ENCODE measurements at regions of chr22 and their contacts with region 1.

Region 1: GRCh38 chr22:40651563-40652501 is 15.3 kb upstream of the MRTFA start:
- DNase-seq: peak; percentile 100
- H3K4me3 ChIP-seq: peak overlapping the region; percentile 51 to 55 (median 52)
- H3K27ac ChIP-seq: peak overlapping the region; percentile 99
- H3K4me1 ChIP-seq: peaks cover 34% of the 10 kb centered on the region
- H3K27me3 ChIP-seq: no peaks in the 10 kb centered on the region
- CTCF ChIP-seq: peak in 1 of 2 donors; percentile 21

Region 2: GRCh38 chr22:40463683-40464082 is 188.1 kb before region 1 on chr22:
- CTCF ChIA-PET with region 1: no interaction called
- dilution Hi-C with region 1: no loop called
- in situ Hi-C with region 1: no loop called
- intact Hi-C with region 1: no loop called
- DNase-seq: no peak
- H3K4me3 ChIP-seq: no peak overlapping the region
- H3K27ac ChIP-seq: no peak overlapping the region
- H3K4me1 ChIP-seq: no peaks in the 10 kb centered on the region
- H3K27me3 ChIP-seq: no peaks in the 10 kb centered on the region
- CTCF ChIP-seq: no peak

Region 3: DNA sequence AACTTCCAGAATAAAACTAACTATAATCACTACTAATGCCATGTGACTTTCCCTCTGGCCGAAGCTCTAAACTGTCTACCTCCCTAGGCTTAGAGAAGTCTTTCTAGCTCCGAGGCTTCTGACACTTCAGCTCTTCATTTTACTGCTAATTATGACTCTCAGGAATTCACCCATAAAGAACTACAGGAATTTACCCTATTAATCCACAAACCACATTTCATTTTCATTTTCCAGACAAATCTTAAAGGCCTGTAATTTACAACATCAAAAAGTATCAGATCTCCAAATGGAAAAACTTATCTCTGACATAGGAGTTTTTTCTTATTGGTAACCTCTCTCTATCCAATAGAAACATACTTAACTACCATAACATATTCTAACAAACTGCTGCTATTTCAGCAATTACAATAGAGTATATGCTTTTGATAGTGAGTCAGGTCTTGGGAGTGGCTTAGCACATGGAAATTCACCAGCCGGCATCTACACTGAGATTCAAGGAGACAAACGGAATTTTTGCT is 48.7 kb before region 1 on chr22:
- CTCF ChIA-PET with region 1: no interaction called
- dilution Hi-C with region 1: no loop called
- in situ Hi-C with region 1: no loop called
- intact Hi-C with region 1: no loop called
- DNase-seq: peak; percentile 66
- H3K4me3 ChIP-seq: peak overlapping the region in 2 of 3 experiments; percentile 21 to 37
- H3K27ac ChIP-seq: peak overlapping the region; percentile 92
- H3K4me1 ChIP-seq: peaks cover 52% of the 10 kb centered on the region
- H3K27me3 ChIP-seq: no peaks in the 10 kb centered on the region
- CTCF ChIP-seq: no peak

Region 4: GRCh38 chr22:40668611-40669411 is 17.0 kb after region 1 on chr22:
- CTCF ChIA-PET with region 1: no interaction called
- dilution Hi-C with region 1: no loop called
- in situ Hi-C with region 1: no loop called
- intact Hi-C with region 1: loop called (anchors 2 kb)
- DNase-seq: peak; percentile 87
- H3K4me3 ChIP-seq: no peak overlapping the region
- H3K27ac ChIP-seq: peak overlapping the region; percentile 33
- H3K4me1 ChIP-seq: peaks cover 11% of the 10 kb centered on the region
- H3K27me3 ChIP-seq: no peaks in the 10 kb centered on the region
- CTCF ChIP-seq: no peak

Region 5: GRCh38 chr22:40679964-40680818 is 28.4 kb after region 1 on chr22:
- CTCF ChIA-PET with region 1: no interaction called
- dilution Hi-C with region 1: no loop called
- in situ Hi-C with region 1: no loop called
- intact Hi-C with region 1: loop called (anchors 1 kb)
- DNase-seq: no peak
- H3K4me3 ChIP-seq: no peak overlapping the region
- H3K27ac ChIP-seq: no peak overlapping the region
- H3K4me1 ChIP-seq: peaks cover 27% of the 10 kb centered on the region
- H3K27me3 ChIP-seq: no peaks in the 10 kb centered on the region
- CTCF ChIP-seq: peak in 1 of 2 donors; percentile 10

Region 6: GRCh38 chr22:40709752-40710413 is 58.1 kb after region 1 on chr22:
- CTCF ChIA-PET with region 1: no interaction called
- dilution Hi-C with region 1: no loop called
- in situ Hi-C with region 1: no loop called
- intact Hi-C with region 1: no loop called
- DNase-seq: no peak
- H3K4me3 ChIP-seq: no peak overlapping the region
- H3K27ac ChIP-seq: no peak overlapping the region
- H3K4me1 ChIP-seq: no peaks in the 10 kb centered on the region
- H3K27me3 ChIP-seq: no peaks in the 10 kb centered on the region
- CTCF ChIP-seq: no peak

Region 7: DNA sequence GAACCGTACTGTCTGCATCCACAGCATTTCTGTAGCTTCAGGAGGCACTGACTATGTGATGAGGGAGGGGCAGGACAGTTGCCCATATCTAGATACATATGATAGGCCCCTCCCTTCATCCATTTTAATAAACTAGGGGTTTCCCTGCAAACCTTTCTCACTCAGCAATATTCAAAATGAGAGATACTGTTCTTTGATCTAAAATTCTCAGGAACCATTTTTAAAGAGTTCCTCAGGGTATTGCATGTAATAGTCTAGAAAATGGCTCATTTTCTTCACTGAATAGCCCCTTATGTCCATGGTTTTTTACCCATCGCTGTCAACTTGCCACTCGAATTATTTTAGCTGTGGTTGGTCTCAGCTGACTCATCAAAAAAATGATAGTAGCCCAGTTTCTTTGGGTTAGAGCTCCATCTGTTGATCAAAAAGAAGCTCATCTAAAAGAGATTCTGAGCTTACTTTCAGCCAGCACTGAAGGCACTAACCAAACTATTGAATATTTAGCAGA is 247.1 kb after region 1 on chr22:
- CTCF ChIA-PET with region 1: no interaction called
- dilution Hi-C with region 1: no loop called
- in situ Hi-C with region 1: loop called in 1 of 2 experiments (anchors 10 kb)
- intact Hi-C with region 1: loop called (anchors 10 kb)
- DNase-seq: peak; percentile 52
- H3K4me3 ChIP-seq: no peak overlapping the region
- H3K27ac ChIP-seq: no peak overlapping the region
- H3K4me1 ChIP-seq: peaks cover 2% of the 10 kb centered on the region
- H3K27me3 ChIP-seq: no peaks in the 10 kb centered on the region
- CTCF ChIP-seq: peak; percentile 56 to 59

Measured in mammary epithelial cell (primary cell).